ENCODE measurements at regions of chr3 and their contacts with region 1.

Region 1: GRCh38 chr3:15768421-15769255 is 29.1 kb downstream of the ANKRD28 start:
- DNase-seq: peak; percentile 94
- H3K4me3 ChIP-seq: no peak overlapping the region
- H3K27ac ChIP-seq: peak overlapping the region; percentile 89
- H3K4me1 ChIP-seq: peaks cover 17% of the 10 kb centered on the region
- H3K27me3 ChIP-seq: no peaks in the 10 kb centered on the region
- CTCF ChIP-seq: no peak
- POLR2A ChIP-seq: no peak

Region 2: DNA sequence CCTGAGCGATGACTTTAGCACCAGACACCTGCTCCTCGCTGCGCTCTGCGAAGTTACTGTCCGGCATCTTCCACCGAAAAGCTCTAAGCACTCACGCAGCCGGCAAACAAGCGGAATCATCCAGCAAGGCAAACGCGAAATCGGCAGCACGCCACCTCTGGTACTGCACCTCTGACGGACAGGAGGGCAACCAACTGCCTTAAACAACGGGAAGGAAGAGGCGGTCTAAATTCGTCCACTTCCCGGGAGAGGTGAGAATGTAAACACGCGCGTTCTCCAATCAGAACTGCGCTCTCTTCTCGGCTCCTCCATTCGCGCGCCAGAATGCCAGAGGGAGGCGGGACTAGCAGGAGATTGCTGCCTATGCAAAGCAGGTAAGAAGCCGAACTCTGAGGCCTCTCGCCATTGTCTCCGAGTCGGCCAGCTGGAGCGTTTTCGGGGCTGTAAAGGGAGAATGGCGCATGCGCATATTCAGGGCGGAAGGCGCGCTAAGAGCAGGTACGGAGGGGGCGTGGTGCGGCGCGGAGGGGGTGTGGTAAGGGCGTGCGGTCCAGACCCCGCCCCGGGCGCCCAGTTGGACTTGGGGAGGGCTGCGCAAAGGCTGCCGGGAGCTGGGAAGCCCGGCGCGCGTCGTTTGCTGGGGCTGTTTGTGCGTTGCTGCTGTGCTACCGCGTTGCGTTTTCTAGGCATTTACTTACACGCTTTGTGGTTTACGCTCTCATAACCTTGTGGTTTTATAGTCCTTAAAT is 167.1 kb before region 1 on chr3 and contains the starts of genes BTD and HACL1:
- CTCF ChIA-PET with region 1: interaction called, 3 read pairs
- POLR2A ChIA-PET with region 1: no interaction called
- dilution Hi-C with region 1: no loop called
- intact Hi-C with region 1: loop called (anchors 1 kb)
- DNase-seq: peak; percentile 100
- H3K4me3 ChIP-seq: peak within 1 kb of the TSS; percentile 73 to 86 (median 74)
- H3K27ac ChIP-seq: peak within 1 kb of the TSS; percentile 61
- H3K4me1 ChIP-seq: peaks cover 16% of the 10 kb centered on the region
- H3K27me3 ChIP-seq: no peaks in the 10 kb centered on the region
- CTCF ChIP-seq: no peak
- POLR2A ChIP-seq: peak; percentile 94
- total RNA-seq, gene BTD: 18.7 and 20.3 TPM in 2 replicates
- total RNA-seq, gene HACL1: 27.4 and 29.9 TPM in 2 replicates

Region 3: GRCh38 chr3:15636003-15636709 is 132.5 kb before region 1 on chr3:
- CTCF ChIA-PET with region 1: interaction called, 4 read pairs
- POLR2A ChIA-PET with region 1: no interaction called
- dilution Hi-C with region 1: no loop called
- intact Hi-C with region 1: loop called (anchors 1 kb)
- DNase-seq: peak; percentile 96
- H3K4me3 ChIP-seq: no peak overlapping the region
- H3K27ac ChIP-seq: peak overlapping the region; percentile 93
- H3K4me1 ChIP-seq: peaks cover 73% of the 10 kb centered on the region
- H3K27me3 ChIP-seq: no peaks in the 10 kb centered on the region
- CTCF ChIP-seq: peak in 1 of 2 donors; percentile 5
- POLR2A ChIP-seq: peak; percentile 87

Region 4: GRCh38 chr3:15783361-15783969 is 14.8 kb after region 1 on chr3:
- CTCF ChIA-PET with region 1: interaction called, 3 read pairs
- POLR2A ChIA-PET with region 1: no interaction called
- dilution Hi-C with region 1: no loop called
- intact Hi-C with region 1: loop called (anchors 1 kb)
- DNase-seq: peak; percentile 75
- H3K4me3 ChIP-seq: peak overlapping the region in 1 of 3 experiments; percentile 11
- H3K27ac ChIP-seq: peak overlapping the region; percentile 71
- H3K4me1 ChIP-seq: peaks cover 24% of the 10 kb centered on the region
- H3K27me3 ChIP-seq: no peaks in the 10 kb centered on the region
- CTCF ChIP-seq: no peak
- POLR2A ChIP-seq: no peak

Region 5: GRCh38 chr3:15797642-15798303 is 29.1 kb after region 1 on chr3 and contains the start of gene ANKRD28:
- CTCF ChIA-PET with region 1: interaction called, 3 read pairs
- POLR2A ChIA-PET with region 1: interaction called, 3 read pairs
- dilution Hi-C with region 1: no loop called
- intact Hi-C with region 1: loop called (anchors 1 kb)
- DNase-seq: peak; percentile 95
- H3K4me3 ChIP-seq: peak within 1 kb of the TSS; percentile 26 to 100 (median 84)
- H3K27ac ChIP-seq: peak within 1 kb of the TSS; percentile 96
- H3K4me1 ChIP-seq: peaks cover 26% of the 10 kb centered on the region
- H3K27me3 ChIP-seq: no peaks in the 10 kb centered on the region
- CTCF ChIP-seq: peak in 1 of 2 donors; percentile 31
- POLR2A ChIP-seq: no peak
- total RNA-seq, gene ANKRD28: 82.2 and 97.3 TPM in 2 replicates

Region 6: GRCh38 chr3:15845475-15845874 is 76.8 kb after region 1 on chr3:
- CTCF ChIA-PET with region 1: no interaction called
- POLR2A ChIA-PET with region 1: no interaction called
- dilution Hi-C with region 1: no loop called
- intact Hi-C with region 1: no loop called
- DNase-seq: no peak
- H3K4me3 ChIP-seq: no peak overlapping the region
- H3K27ac ChIP-seq: no peak overlapping the region
- H3K4me1 ChIP-seq: no peaks in the 10 kb centered on the region
- H3K27me3 ChIP-seq: no peaks in the 10 kb centered on the region
- CTCF ChIP-seq: no peak
- POLR2A ChIP-seq: no peak

Region 7: DNA sequence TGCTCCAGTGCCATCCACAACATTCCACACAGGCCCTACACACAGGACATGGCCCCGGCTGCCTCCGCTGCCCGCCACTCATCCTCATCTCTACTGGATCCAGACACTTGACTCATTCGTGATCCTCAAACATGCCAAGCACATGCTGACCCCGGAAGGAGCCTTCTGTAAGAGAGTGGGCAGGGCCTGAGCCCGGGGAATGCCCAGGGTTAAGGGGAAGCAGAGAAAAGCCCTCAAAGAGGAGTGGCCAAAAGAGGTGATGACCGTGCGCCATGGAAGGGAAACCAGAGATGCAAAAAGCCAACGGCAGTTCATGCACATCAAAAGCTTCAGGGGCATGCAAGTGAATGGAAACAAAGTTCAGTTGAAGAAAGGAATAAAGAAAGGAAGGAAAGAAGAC is 698.8 kb after region 1 on chr3:
- CTCF ChIA-PET with region 1: no interaction called
- POLR2A ChIA-PET with region 1: no interaction called
- dilution Hi-C with region 1: no loop called
- intact Hi-C with region 1: no loop called
- DNase-seq: no peak
- H3K4me3 ChIP-seq: no peak overlapping the region
- H3K27ac ChIP-seq: no peak overlapping the region
- H3K4me1 ChIP-seq: peaks cover 22% of the 10 kb centered on the region
- H3K27me3 ChIP-seq: no peaks in the 10 kb centered on the region
- CTCF ChIP-seq: no peak
- POLR2A ChIP-seq: no peak

Measured in endothelial cell of umbilical vein (primary cell).